GM13976 (cell line): ENCODE measurements at regions of chr6 and their contacts with region 1.

Region 1: GRCh38 chr6:34154668-34155447 is 9.0 kb upstream of the GRM4 start:
- DNase-seq: peak; percentile 92
- CTCF ChIP-seq: peak; percentile 98

Region 2: GRCh38 chr6:34055223-34055933 is 99.5 kb before region 1 on chr6:
- in situ Hi-C with region 1: loop called (anchors 10 kb)
- DNase-seq: peak; percentile 86
- CTCF ChIP-seq: peak; percentile 66